ENCODE measurements at regions of chr1 and their contacts with region 1.

Region 1: GRCh38 chr1:197924516-197925123 is 7.4 kb downstream of the LHX9 start:
- DNase-seq: no peak
- H3K4me3 Mint-ChIP-seq: no peak overlapping the region
- H3K27ac Mint-ChIP-seq: no peak overlapping the region
- H3K4me1 Mint-ChIP-seq: peaks cover 22% of the 10 kb centered on the region
- H3K27me3 Mint-ChIP-seq: peaks cover 83% of the 10 kb centered on the region

Region 2: GRCh38 chr1:197399755-197400527 is 524.7 kb before region 1 on chr1:
- intact Hi-C with region 1: loop called (anchors 10 kb)
- DNase-seq: no peak
- H3K4me3 Mint-ChIP-seq: no peak overlapping the region
- H3K27ac Mint-ChIP-seq: no peak overlapping the region
- H3K4me1 Mint-ChIP-seq: no peaks in the 10 kb centered on the region
- H3K27me3 Mint-ChIP-seq: peaks cover 5% of the 10 kb centered on the region

Region 3: DNA sequence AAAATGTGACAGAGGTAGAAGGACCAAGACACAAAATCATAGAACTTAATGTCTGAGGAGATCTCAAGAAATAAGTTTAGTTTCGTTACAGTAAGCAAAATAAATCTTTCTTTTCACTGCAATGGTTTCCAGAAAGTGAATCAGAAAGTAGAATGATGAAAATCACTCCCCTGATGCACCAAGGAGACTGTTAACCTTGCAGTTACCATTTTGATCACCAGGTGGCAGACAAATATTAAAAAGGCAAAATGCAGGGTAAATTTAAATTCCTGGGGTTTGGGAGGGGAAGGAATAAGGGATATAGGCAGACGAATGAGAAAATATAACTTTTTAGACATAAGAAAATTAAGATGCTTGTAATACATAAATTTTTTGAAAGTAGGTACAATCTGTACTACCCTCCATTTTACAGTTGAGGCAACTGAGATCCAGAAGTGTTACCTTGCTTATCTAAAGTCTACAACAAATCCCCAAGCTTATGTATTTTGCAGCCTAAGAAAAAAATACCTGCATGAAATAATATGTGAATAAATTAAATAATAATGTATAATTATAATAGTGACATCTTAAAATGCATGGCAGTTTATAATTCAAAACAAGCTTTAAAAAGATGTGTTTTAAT is 403.4 kb before region 1 on chr1:
- intact Hi-C with region 1: loop called (anchors 1 kb)
- DNase-seq: no peak
- H3K4me3 Mint-ChIP-seq: no peak overlapping the region
- H3K27ac Mint-ChIP-seq: no peak overlapping the region
- H3K4me1 Mint-ChIP-seq: peaks cover 7% of the 10 kb centered on the region
- H3K27me3 Mint-ChIP-seq: no peaks in the 10 kb centered on the region

Region 4: GRCh38 chr1:197526736-197527371 is 397.8 kb before region 1 on chr1:
- intact Hi-C with region 1: loop called (anchors 1 kb)
- DNase-seq: no peak
- H3K4me3 Mint-ChIP-seq: no peak overlapping the region
- H3K27ac Mint-ChIP-seq: no peak overlapping the region
- H3K4me1 Mint-ChIP-seq: no peaks in the 10 kb centered on the region
- H3K27me3 Mint-ChIP-seq: no peaks in the 10 kb centered on the region

Region 5: GRCh38 chr1:197614916-197615692 is 309.5 kb before region 1 on chr1:
- intact Hi-C with region 1: loop called (anchors 1 kb)
- DNase-seq: no peak
- H3K4me3 Mint-ChIP-seq: no peak overlapping the region
- H3K27ac Mint-ChIP-seq: no peak overlapping the region
- H3K4me1 Mint-ChIP-seq: no peaks in the 10 kb centered on the region
- H3K27me3 Mint-ChIP-seq: no peaks in the 10 kb centered on the region

Region 6: DNA sequence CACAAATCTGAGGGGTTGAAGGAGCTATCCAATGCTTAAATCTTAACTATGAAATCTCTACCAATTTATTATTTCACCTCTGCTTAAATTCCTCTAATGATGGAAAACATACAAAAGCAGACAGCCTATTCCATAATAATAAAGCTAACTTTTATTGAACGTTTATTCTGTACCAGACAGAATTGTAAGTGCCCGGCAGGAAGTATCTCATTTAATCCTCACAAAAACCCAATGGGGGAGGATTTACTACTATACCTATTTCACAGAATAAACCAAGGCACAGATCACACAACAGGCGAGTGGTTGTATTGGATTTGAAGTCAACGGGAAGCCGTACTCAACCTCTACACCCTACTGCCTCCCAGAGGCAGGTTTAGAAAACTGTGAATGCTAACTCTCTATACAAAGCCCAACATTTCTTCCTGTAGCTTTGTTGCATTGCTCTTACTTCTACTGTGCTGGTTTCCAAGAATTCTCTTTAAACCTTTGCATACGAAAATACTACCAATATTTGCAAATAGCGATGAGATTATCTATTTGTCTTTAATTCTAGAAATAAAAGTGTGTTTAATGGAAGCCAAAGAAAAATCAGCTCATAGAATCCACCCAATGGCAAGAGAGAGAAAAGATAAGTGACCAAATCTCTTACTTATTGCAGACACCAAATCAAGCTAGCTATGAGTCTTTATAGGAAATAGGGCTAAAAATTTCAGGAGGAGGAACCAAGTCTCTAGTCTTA is 55.7 kb before region 1 on chr1:
- intact Hi-C with region 1: loop called (anchors 2 kb)
- DNase-seq: peak; percentile 25
- H3K4me3 Mint-ChIP-seq: no peak overlapping the region
- H3K27ac Mint-ChIP-seq: no peak overlapping the region
- H3K4me1 Mint-ChIP-seq: no peaks in the 10 kb centered on the region
- H3K27me3 Mint-ChIP-seq: peaks cover 29% of the 10 kb centered on the region

Region 7: GRCh38 chr1:198359024-198359653 is 434.5 kb after region 1 on chr1:
- intact Hi-C with region 1: loop called (anchors 5 kb)
- DNase-seq: no peak
- H3K4me3 Mint-ChIP-seq: no peak overlapping the region
- H3K27ac Mint-ChIP-seq: no peak overlapping the region
- H3K4me1 Mint-ChIP-seq: no peaks in the 10 kb centered on the region
- H3K27me3 Mint-ChIP-seq: no peaks in the 10 kb centered on the region

Measured in activated T-helper 1 cell treated with anti-CD3 and anti-CD28 coated beads, Interleukin-12 subunit alpha, Interleukin-12 subunit beta, Interleukin-2, Interleukin-4 antibody, amounts not matched to agents 30 ng/mL and 10 ng/mL and 1 ng/mL, durations not matched to agents 14 hours and 24 hours and 36 hours (primary cell).